Mammary epithelial cell (primary cell): ENCODE measurements at regions of chr21 and their contacts with region 1.

Region 1: DNA sequence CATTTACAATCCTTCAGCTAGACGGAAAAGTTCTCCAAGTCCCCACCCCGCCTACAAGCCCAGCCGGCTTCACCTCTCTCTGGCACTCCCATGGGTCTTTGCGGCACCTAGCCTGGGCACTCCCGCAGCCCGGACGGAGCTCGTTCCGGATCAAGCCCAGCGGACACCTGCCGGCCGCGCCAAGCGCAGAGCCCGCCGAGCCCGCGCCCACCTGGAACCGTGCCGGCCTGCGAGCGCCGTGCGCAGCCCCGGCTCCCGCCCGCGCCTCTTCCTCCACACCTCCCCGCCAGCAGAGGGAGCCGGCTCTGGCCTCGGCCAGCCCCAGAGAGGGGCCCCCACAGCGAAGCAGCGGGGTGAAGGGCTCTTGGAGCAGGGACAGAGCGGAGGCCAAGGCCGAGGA is 50.0 kb upstream of the KRTAP19-8 start:
- DNase-seq: no peak
- H3K4me3 ChIP-seq: no peak overlapping the region
- H3K27ac ChIP-seq: no peak overlapping the region
- H3K4me1 ChIP-seq: no peaks in the 10 kb centered on the region
- H3K27me3 ChIP-seq: no peaks in the 10 kb centered on the region
- CTCF ChIP-seq: no peak

Region 2: DNA sequence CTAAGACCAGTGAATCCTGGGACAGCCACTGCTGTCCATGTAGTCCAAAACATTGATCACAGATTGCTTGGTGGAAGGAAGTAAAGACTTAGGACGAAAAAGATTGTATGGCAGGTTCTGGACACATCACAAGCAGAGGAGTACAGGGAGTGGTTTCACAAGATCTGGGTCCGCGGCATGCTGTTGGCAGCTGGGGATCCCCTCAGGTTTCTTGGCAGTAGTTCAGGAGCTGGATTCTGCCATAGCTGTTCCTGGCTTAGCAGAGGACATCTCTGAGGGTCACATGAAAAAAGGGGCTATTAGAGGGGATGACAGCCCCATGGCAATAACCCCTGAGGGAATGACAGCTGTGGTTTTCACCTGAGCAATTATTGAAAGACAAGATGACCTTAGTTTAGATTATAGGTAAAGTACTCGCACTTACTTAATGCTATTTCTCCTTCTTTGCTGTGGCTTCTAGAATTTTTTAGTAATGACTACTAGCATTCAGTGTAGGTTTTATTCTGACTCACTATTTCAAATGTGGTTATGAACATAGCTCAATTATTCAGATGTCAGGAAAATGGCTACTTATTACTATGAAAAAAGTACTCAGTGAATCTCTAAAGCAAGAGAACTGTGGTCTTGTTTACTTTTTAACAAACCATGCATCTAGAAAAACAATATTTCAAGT is 759.0 kb before region 1 on chr21:
- CTCF ChIA-PET with region 1: interaction called, 11 read pairs
- dilution Hi-C with region 1: no loop called
- in situ Hi-C with region 1: no loop called
- intact Hi-C with region 1: no loop called
- DNase-seq: peak; percentile 83
- H3K4me3 ChIP-seq: peak overlapping the region in 1 of 3 experiments; percentile 14
- H3K27ac ChIP-seq: no peak overlapping the region
- H3K4me1 ChIP-seq: peaks cover 9% of the 10 kb centered on the region
- H3K27me3 ChIP-seq: no peaks in the 10 kb centered on the region
- CTCF ChIP-seq: no peak

Region 3: GRCh38 chr21:30502041-30502440 is 586.3 kb before region 1 on chr21 and contains the start of gene KRTAP19-5:
- CTCF ChIA-PET with region 1: no interaction called
- dilution Hi-C with region 1: no loop called
- in situ Hi-C with region 1: no loop called
- intact Hi-C with region 1: loop called (anchors 1 kb)
- DNase-seq: no peak
- H3K4me3 ChIP-seq: no peak within 1 kb of the TSS
- H3K27ac ChIP-seq: no peak within 1 kb of the TSS
- H3K4me1 ChIP-seq: no peaks in the 10 kb centered on the region
- H3K27me3 ChIP-seq: no peaks in the 10 kb centered on the region
- CTCF ChIP-seq: no peak
- total RNA-seq, gene KRTAP19-5: not detected

Region 4: DNA sequence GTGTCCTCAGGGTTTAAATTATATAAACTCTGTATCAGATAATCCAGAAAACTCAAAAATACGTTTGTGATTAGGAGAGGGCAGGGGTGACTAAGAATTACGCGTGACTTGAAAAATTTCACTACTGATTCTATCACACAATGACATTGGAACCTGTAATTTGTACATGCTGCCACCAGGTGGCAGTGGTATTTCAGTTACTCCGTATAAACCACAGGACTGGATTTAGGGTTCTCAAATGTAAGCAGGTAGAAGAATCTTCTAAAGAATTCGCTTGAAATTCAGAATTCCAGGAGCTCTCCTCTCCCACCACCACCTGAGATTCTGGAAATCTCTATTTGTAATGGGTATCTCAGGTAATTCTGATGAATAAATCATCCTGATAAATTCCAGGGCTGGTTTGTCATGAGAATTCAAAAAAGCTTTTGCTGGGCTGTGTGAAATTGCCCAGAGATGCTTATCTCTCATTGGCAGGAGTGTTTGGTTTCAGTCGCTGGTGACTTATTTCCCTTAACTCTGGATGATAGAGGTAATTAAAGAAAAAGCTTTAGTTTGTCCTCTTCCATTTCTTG is 257.0 kb before region 1 on chr21:
- CTCF ChIA-PET with region 1: no interaction called
- dilution Hi-C with region 1: no loop called
- in situ Hi-C with region 1: no loop called
- intact Hi-C with region 1: loop called (anchors 2 kb)
- DNase-seq: peak; percentile 30
- H3K4me3 ChIP-seq: no peak overlapping the region
- H3K27ac ChIP-seq: no peak overlapping the region
- H3K4me1 ChIP-seq: no peaks in the 10 kb centered on the region
- H3K27me3 ChIP-seq: no peaks in the 10 kb centered on the region
- CTCF ChIP-seq: peak; percentile 34 to 38